ENCODE measurements at regions of chr10 and their contacts with region 1.

Region 1: GRCh38 chr10:29735596-29736318 is 101.0 kb upstream of the SVIL start:
- DNase-seq: peak; percentile 26
- H3K4me3 ChIP-seq: peak overlapping the region; percentile 67 to 97 (median 84)
- H3K27ac ChIP-seq: peak overlapping the region; percentile 96 to 100 (median 98)
- H3K4me1 ChIP-seq: peaks cover 12 to 55% (median 13%) of the 10 kb centered on the region in 3 donors
- H3K27me3 ChIP-seq: no peaks in the 10 kb centered on the region
- CTCF ChIP-seq: peak; percentile 85 to 98 (median 92)
- POLR2A ChIP-seq: peak in 3 of 4 donors; percentile 38 to 85 (median 69)

Region 2: DNA sequence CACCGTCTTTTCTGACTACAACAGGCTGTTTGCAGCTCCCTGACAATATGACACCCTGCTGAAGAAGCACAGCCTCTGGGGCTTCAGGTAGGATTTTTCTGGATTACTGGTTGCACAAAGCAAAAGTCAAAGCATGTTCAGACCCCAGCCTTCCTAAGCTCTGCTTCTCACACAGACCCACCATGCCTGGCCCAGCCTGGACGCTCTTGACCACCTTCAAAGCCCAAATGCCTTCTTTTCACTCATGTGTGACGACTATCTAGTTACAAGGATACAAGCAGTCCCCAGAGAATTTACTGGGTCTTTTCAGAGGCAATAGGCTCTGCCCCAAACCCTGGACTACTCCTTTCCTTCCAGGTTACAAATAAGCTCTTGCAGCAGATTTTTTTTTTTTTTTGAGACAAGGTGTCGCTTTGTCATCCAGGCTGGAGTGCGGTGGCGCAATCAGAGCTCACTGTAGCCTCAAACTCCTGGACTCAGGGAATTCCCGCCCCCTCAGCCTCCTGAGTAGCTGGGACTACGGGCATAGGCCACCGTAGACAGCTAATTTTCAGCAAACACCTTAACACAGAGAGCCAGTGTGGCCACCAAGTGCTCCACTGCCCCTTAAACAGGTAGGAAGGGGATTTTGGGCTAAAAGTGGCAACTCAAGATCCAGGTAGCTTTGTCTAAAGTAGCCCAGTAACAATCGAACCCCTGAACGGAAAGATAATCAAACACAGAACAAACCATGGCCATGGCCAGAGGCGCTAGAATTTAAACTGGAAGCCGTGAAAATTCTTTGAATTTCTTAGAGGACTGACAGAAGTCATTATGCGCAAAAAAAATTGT is 117.2 kb before region 1 on chr10:
- intact Hi-C with region 1: loop called (anchors 10 kb)
- DNase-seq: no peak
- H3K4me3 ChIP-seq: peak overlapping the region in 1 of 4 donors; percentile 1
- H3K27ac ChIP-seq: peak overlapping the region; percentile 50 to 79 (median 76)
- H3K4me1 ChIP-seq: peaks cover 24 to 73% (median 40%) of the 10 kb centered on the region in 3 donors
- H3K27me3 ChIP-seq: no peaks in the 10 kb centered on the region
- CTCF ChIP-seq: no peak
- POLR2A ChIP-seq: no peak

Region 3: DNA sequence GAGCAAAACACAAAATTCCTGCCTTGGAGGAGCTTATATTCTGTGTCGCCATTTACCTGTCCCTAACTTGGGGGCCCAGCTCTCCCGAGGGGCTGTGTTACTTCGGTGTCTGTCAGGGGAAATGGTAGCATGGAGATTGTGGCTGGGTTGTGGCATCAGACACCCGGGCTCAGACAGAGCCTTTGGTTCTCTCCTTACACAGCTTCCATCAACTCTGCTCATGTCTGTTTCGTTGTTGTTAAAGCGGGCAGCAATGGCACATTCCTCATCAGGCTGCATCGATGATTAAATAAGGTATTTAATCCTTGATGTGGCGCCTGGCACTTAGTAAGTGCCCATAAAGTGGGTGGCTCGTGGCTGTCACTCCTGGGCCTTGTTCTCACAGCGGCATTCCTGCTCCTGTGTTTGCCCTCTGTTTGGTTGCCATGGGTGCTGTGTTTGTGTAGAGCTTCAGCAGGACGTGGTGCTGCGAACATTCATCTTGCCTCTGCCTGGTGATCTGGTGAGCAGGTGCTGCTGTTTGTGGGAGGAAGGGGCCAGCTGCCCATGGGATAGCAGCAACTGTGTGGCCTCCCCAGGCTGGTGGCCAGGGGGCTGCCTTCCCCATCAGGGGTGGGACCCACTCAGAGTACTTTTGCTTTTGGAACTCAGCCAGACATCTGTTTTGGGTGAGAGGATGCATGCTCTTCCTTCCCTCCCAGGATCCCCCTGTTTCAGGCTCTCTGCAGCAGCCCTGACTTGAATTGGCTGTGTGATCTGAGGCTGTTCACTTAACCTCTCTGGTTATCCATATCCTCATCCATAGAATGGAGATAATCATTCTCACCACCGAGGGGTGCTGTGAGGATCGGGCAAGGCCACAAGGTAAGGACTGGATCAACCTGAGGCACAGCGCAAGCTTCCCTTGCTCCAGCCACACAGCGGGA is 106.2 kb after region 1 on chr10:
- intact Hi-C with region 1: loop called (anchors 10 kb)
- DNase-seq: no peak
- H3K4me3 ChIP-seq: no peak overlapping the region
- H3K27ac ChIP-seq: peak overlapping the region; percentile 88 to 94 (median 92)
- H3K4me1 ChIP-seq: peaks cover 11 to 53% (median 30%) of the 10 kb centered on the region in 3 donors
- H3K27me3 ChIP-seq: no peaks in the 10 kb centered on the region
- CTCF ChIP-seq: no peak
- POLR2A ChIP-seq: no peak

Region 4: DNA sequence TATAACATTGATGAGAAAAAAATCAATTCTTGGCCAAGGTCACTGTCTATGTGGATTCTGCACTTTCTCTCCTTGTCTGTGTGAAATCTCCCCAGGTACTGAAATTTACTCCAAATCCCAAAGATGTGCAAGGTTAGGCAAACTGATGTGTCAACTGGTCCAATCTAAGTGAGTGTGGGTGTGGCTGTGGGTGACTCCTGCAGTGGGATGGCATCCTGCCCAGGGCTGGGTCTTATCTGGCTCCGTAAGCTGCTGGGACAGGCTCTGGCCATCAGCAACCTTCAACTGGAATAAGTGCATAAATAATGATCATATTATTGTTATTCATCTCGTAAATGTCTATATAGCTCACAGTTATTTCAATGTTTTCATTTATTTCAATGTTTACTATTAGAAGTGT is 244.3 kb after region 1 on chr10:
- intact Hi-C with region 1: no loop called
- DNase-seq: no peak
- H3K4me3 ChIP-seq: no peak overlapping the region
- H3K27ac ChIP-seq: no peak overlapping the region
- H3K4me1 ChIP-seq: no peaks in the 10 kb centered on the region
- H3K27me3 ChIP-seq: no peaks in the 10 kb centered on the region
- CTCF ChIP-seq: no peak
- POLR2A ChIP-seq: no peak

Region 5: GRCh38 chr10:29998142-29998808 is 262.5 kb after region 1 on chr10:
- intact Hi-C with region 1: loop called (anchors 10 kb)
- DNase-seq: no peak
- H3K4me3 ChIP-seq: no peak overlapping the region
- H3K27ac ChIP-seq: no peak overlapping the region
- H3K4me1 ChIP-seq: peaks cover 5 to 59% (median 22%) of the 10 kb centered on the region in 3 donors
- H3K27me3 ChIP-seq: no peaks in the 10 kb centered on the region
- CTCF ChIP-seq: peak; percentile 70 to 97 (median 95)
- POLR2A ChIP-seq: no peak

Measured in esophagus squamous epithelium (tissue), 5 donors.